ENCODE measurements at regions of chr12 and their contacts with region 1.

Region 1: DNA sequence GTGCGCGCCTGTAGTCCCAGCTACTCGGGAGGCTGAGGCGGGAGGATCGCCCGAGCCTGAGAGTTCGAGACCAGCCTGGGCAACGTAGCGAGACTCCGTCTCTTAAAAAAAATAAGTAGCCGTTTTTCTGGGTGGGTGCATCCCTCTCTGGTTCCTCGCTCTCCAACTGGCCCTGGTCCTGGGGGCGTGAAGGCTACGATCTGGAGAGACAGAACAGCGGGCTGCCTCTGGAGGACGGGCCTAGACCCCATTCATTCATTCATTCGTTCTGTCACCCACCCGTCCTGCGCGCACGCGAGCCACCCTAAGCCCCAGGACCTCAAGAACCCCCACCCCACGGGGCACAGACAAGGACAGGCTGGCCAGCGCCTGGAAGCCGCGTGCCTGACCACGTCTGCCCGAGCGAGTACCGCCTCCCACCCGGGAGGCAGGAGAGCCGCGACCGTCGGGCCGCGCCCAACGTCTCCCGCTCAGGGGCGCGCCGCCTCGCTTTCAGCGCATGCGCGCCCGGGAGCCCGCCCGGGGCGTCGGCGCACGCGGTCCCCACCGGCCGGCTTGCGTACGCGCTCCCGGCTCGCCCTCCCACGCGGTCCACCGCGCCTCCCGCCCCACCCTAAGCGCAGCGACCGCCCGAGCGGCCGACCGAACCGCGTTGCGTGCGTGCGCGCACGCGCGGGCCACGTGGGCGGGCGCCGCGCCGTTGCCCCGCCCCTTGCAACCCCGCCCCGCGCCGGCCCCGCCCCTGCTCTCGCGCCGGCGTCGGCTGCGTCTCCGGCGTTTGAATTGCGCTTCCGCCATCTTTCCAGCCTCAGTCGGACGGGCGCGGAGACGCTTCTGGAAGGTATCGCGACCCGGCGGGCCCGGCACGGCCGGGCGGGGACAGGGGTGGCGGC is at the start of gene RAN:
- DNase-seq: peak; percentile 89
- H3K4me3 ChIP-seq: peak within 1 kb of the TSS; percentile 69 to 99 (median 96)
- H3K27ac ChIP-seq: peak within 1 kb of the TSS; percentile 70
- H3K4me1 ChIP-seq: peaks cover 23% of the 10 kb centered on the region
- H3K27me3 ChIP-seq: no peaks in the 10 kb centered on the region
- CTCF ChIP-seq: no peak
- POLR2A ChIP-seq: peak; percentile 89
- total RNA-seq, gene RAN: 1,205 and 1,212 TPM in 2 replicates

Region 2: DNA sequence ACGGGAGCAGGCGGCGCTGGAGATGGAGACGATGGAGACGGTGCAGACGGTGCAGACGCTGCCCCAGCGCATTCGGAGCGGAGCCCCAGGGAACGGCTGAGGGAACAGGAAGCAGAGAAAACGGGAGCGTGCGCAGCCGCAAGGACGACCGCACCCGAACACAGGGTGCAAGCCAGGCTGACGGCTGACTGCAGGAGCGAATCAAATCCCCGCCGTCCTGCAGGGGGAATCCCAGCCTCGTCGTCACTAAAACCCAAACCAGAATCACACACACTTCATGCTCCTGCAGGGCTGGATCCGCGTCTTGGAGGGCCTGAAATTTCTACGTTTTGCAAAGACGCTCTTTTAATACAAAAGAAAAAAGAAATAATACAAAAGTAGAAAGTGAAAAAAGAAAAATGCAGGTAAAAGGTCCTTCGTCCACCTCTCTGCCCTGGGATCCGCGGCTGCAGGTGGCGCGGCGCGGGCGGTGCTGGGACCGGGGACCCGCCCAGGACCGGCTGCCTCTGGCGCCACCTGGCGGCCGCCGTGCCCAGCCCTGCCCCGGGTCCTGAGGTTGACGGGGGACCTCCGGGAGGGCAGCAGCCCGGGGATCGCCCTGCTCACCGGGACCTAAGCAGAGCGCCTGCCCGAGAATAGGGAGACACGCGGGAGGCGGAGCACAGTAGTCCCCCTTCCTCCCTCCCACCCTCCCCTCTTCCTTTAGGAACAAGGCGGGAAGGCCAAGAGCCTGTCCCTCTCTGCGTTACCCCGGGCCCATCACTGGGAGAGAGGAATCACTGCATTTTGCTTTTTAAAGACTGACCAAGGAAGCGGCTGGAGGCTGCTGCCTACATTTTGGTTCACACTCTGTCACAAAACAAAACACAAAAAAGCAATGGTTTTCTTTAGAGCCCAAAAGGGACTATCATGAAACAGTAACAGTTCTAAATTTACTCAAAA is 52.6 kb before region 1 on chr12:
- CTCF ChIA-PET with region 1: no interaction called
- POLR2A ChIA-PET with region 1: no interaction called
- dilution Hi-C with region 1: no loop called
- intact Hi-C with region 1: loop called (anchors 5 kb)
- DNase-seq: peak; percentile 36
- H3K4me3 ChIP-seq: peak overlapping the region; percentile 33 to 67 (median 66)
- H3K27ac ChIP-seq: no peak overlapping the region
- H3K4me1 ChIP-seq: no peaks in the 10 kb centered on the region
- H3K27me3 ChIP-seq: no peaks in the 10 kb centered on the region
- CTCF ChIP-seq: peak; percentile 78 to 85
- POLR2A ChIP-seq: no peak

Region 3: GRCh38 chr12:131710464-131711457 is 839.2 kb after region 1 on chr12 and contains the start of gene SFSWAP:
- CTCF ChIA-PET with region 1: no interaction called
- POLR2A ChIA-PET with region 1: no interaction called
- dilution Hi-C with region 1: no loop called
- intact Hi-C with region 1: loop called (anchors 10 kb)
- DNase-seq: peak; percentile 80
- H3K4me3 ChIP-seq: peak within 1 kb of the TSS; percentile 56 to 81 (median 60)
- H3K27ac ChIP-seq: peak within 1 kb of the TSS; percentile 98
- H3K4me1 ChIP-seq: peaks cover 16% of the 10 kb centered on the region
- H3K27me3 ChIP-seq: no peaks in the 10 kb centered on the region
- CTCF ChIP-seq: no peak
- POLR2A ChIP-seq: peak; percentile 79
- total RNA-seq, gene SFSWAP: 53.1 and 53.3 TPM in 2 replicates

Region 4: DNA sequence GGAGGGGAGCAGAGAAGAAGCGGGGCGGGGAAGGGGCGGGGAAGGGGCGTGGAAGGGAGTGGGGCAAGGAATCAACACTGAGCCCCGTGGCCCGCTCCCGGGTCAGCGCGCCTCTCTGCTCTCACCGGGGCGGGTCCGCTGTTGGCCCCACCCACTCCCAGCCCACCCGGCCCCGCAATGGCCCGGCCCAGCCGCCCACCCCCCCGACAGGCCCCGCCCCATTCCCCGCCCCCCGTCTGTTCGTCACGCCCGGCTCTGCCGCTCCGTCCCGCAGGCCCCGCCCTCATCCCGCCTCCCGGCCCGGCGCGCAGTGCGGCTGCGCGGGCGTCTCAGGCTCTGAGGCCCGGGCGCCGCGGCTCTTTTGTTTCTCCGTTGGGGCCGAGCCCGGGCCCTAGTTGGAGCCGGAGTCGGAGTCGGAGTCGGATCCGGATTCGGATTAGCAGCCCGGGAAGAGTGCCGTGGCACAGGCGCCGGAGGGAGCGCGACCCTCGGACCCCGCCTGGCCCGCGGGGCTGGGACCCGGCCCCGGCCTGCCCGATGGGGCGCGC is 1022.9 kb after region 1 on chr12 and contains the start of gene ULK1:
- CTCF ChIA-PET with region 1: no interaction called
- POLR2A ChIA-PET with region 1: no interaction called
- dilution Hi-C with region 1: no loop called
- intact Hi-C with region 1: loop called (anchors 5 kb)
- DNase-seq: peak; percentile 79
- H3K4me3 ChIP-seq: peak within 1 kb of the TSS; percentile 37 to 56 (median 52)
- H3K27ac ChIP-seq: peak within 1 kb of the TSS; percentile 60
- H3K4me1 ChIP-seq: peaks cover 9% of the 10 kb centered on the region
- H3K27me3 ChIP-seq: peaks cover 0 to 3% of the 10 kb centered on the region in 2 experiments
- CTCF ChIP-seq: no peak
- POLR2A ChIP-seq: peak; percentile 92
- total RNA-seq, gene ULK1: 37.8 and 38.2 TPM in 2 replicates